PC-3 (cell line): ENCODE measurements at regions of chr1 and their contacts with region 1.

Region 1: DNA sequence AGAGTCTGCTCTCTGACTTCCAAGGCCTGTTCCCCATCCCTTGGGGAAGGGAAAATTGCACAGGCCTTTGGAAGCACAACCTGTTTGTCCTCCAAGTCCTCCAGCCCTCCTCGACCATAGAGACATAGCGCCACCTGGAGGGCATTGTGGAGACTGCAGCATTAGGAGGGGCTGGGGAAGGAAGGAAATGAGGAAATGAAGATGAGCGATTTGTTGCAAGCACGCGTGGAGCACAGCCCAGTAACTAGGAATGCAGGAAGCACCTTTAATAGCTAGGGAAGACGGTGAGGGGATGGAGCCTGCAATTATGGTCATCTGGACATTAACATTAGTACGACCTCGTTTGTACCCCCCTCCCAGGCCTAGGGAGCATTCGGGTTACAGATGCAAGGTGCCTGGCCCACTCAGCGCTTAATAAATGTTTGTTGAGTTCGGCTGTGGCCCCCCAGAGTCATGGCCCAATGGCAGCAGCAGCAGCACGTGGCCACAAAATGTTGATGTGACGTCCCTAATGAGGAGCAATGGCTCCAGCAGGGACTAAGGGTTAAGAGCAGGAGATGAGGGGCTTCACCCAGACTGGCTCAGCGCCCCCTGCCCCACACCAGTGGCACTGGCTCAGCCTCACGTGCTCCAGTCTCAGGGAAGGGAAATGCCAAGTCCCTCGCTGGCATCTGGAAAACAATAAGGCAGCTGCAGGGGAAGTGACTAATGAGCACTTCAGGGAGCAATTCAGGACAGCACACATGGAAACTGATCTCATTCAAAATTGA is 8.0 kb upstream of the CAMK2N1 start:
- DNase-seq: peak; percentile 97
- ATAC-seq: peak; percentile 57
- H3K4me3 ChIP-seq: no peak overlapping the region
- H3K27ac ChIP-seq: peak overlapping the region; percentile 98
- H3K4me1 ChIP-seq: peaks cover 47% of the 10 kb centered on the region
- H3K27me3 ChIP-seq: no peaks in the 10 kb centered on the region
- CTCF ChIP-seq: peak; percentile 95

Region 2: DNA sequence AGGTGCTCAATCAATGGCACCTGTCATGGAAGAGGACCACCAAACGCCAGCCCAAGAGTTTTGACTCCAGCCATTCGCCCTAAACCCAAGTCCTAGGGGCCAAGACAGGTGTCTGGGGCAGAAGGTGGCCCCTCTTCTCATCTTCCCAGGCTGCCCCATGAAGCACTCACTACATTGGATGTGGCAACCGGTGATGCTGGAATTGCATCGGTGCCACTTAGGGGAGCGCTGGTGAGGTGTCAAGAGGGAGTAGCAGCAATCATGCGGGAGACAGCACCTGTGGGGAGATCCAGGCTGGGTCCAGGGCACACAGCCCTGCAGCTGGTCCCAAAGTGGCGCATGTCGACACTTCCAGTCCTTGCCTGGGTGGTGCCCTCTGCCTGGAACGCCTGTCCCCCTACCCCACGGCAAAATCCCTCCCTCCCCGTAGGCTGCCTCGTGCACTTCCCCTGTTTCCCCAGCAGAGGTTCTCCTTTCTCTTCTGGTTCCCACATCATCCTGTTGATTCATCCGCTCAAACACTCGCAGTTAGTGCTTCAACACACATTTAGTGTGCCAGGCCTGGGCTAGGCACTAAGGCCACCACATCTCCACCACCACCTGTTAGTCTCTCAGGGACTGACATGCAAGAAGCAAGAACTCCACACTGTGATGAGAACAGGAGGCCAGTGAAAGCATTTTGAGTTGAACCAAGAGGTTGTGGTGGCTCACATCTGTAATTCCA is 393.2 kb before region 1 on chr1:
- CTCF ChIA-PET with region 1: interaction called, 4 read pairs
- POLR2A ChIA-PET with region 1: no interaction called
- intact Hi-C with region 1: loop called (anchors 5 kb)
- DNase-seq: peak; percentile 77
- ATAC-seq: peak; percentile 79
- H3K4me3 ChIP-seq: no peak overlapping the region
- H3K27ac ChIP-seq: no peak overlapping the region
- H3K4me1 ChIP-seq: peaks cover 24% of the 10 kb centered on the region
- H3K27me3 ChIP-seq: no peaks in the 10 kb centered on the region
- CTCF ChIP-seq: peak; percentile 86

Region 3: DNA sequence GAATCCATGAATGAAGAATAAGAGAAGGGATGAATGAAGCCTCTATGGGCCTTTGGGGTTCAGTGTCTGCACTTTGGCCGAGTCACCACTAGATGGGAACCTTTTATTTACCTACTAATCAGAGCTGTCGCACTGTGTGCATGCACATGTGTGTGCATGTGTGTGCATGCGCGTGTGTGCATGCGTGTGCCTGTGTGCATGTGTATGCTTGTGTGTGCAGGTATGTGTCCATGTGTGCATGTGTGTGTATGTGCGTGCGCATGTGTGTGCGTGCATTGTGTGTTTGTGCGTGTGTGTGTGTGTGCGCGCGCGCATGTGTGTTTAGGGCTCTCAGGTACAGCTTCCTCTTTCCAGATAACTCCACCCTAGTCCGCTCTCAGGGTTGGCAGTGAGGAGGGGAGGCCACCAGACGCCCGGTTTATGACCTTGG is 328.5 kb before region 1 on chr1:
- CTCF ChIA-PET with region 1: interaction called, 5 read pairs
- POLR2A ChIA-PET with region 1: no interaction called
- intact Hi-C with region 1: loop called (anchors 2 kb)
- DNase-seq: peak; percentile 62
- ATAC-seq: peak; percentile 63
- H3K4me3 ChIP-seq: 0 out of 2 replicates have a peak overlapping the region, but pooled peaks have one; percentile 25
- H3K27ac ChIP-seq: peak overlapping the region; percentile 89
- H3K4me1 ChIP-seq: peaks cover 25% of the 10 kb centered on the region
- H3K27me3 ChIP-seq: no peaks in the 10 kb centered on the region
- CTCF ChIP-seq: peak; percentile 72

Region 4: GRCh38 chr1:20376880-20377494 is 117.0 kb before region 1 on chr1:
- CTCF ChIA-PET with region 1: no interaction called
- POLR2A ChIA-PET with region 1: no interaction called
- intact Hi-C with region 1: loop called (anchors 1 kb)
- DNase-seq: peak; percentile 62
- ATAC-seq: peak; percentile 56
- H3K4me3 ChIP-seq: no peak overlapping the region
- H3K27ac ChIP-seq: no peak overlapping the region
- H3K4me1 ChIP-seq: peaks cover 24% of the 10 kb centered on the region
- H3K27me3 ChIP-seq: no peaks in the 10 kb centered on the region
- CTCF ChIP-seq: peak; percentile 82